Activated T-helper 1 cell treated with anti-CD3 and anti-CD28 coated beads, Interleukin-12 subunit alpha, Interleukin-12 subunit beta, Interleukin-2, Interleukin-4 antibody, amounts not matched to agents 30 ng/mL and 10 ng/mL and 1 ng/mL, durations not matched to agents 14 hours and 24 hours and 36 hours (primary cell): ENCODE measurements at regions of chr5 and their contacts with region 1.

Region 1: GRCh38 chr5:41856644-41857491 is 13.4 kb downstream of the OXCT1 start:
- DNase-seq: peak; percentile 46
- H3K4me3 Mint-ChIP-seq: no peak overlapping the region
- H3K27ac Mint-ChIP-seq: no peak overlapping the region
- H3K4me1 Mint-ChIP-seq: peaks cover 27% of the 10 kb centered on the region
- H3K27me3 Mint-ChIP-seq: no peaks in the 10 kb centered on the region

Region 2: DNA sequence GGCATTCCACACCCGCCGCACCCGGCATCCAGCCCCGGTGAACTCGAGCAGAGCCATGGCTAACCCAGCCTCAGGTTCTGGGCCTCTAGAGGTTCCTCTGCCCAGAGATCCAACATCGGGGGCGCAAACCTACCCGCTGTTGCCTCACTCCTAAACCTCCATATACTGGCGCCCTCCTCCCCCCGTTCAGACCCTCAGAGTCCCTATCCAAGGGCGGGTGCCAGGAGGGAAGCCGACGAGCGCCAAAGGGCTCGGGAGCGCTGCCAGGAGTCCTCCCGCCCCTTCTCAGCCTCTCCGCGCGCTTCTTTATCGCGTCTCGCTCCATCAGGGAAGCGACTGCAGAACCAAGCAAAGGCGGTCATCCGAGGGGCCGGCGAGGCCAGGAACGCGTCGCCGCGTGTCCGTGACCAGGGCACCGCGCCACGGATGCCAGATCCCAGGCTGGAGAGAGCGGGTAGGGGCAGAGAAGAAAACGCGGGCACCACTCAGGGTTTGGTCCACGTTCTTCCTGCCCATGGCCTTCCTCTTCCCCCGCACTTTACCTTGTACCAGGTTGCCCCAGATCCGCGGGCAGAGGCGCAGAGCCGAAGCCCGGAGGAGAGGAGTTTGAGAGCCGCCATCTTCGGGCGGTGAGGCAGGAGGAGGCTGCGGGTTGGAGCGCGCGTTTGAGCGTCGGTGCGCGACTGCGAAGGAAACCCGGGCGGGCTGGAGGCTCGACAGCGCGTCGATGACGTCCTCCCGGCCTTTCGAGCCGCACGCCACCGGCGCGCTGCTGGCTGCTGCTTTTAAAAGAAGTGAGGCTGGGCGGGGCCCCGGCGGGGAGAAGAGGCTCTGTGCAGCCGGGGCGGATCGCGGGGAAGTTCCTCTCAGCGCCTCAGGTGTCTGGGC is 13.1 kb after region 1 on chr5 and contains the start of gene OXCT1:
- intact Hi-C with region 1: loop called (anchors 1 kb)
- DNase-seq: peak; percentile 92
- H3K4me3 Mint-ChIP-seq: peak within 1 kb of the TSS; percentile 94
- H3K27ac Mint-ChIP-seq: peak within 1 kb of the TSS; percentile 96
- H3K4me1 Mint-ChIP-seq: peaks cover 56% of the 10 kb centered on the region
- H3K27me3 Mint-ChIP-seq: no peaks in the 10 kb centered on the region
- total RNA-seq, gene OXCT1: 84.4 and 85.1 TPM in 2 replicates

Region 3: GRCh38 chr5:41903892-41904799 is 47.3 kb after region 1 on chr5 and contains the start of gene RIMOC1:
- intact Hi-C with region 1: loop called (anchors 1 kb)
- DNase-seq: peak; percentile 98
- H3K4me3 Mint-ChIP-seq: peak within 1 kb of the TSS; percentile 99
- H3K27ac Mint-ChIP-seq: peak within 1 kb of the TSS; percentile 100
- H3K4me1 Mint-ChIP-seq: peaks cover 54% of the 10 kb centered on the region
- H3K27me3 Mint-ChIP-seq: peaks cover 10% of the 10 kb centered on the region
- total RNA-seq, gene RIMOC1: 28.0 and 29.0 TPM in 2 replicates

Region 4: GRCh38 chr5:42005561-42006153 is 148.8 kb after region 1 on chr5:
- intact Hi-C with region 1: loop called (anchors 1 kb)
- DNase-seq: no peak
- H3K4me3 Mint-ChIP-seq: no peak overlapping the region
- H3K27ac Mint-ChIP-seq: no peak overlapping the region
- H3K4me1 Mint-ChIP-seq: no peaks in the 10 kb centered on the region
- H3K27me3 Mint-ChIP-seq: peaks cover 4% of the 10 kb centered on the region

Region 5: GRCh38 chr5:42366051-42366450 is 509.2 kb after region 1 on chr5:
- intact Hi-C with region 1: no loop called
- DNase-seq: no peak
- H3K4me3 Mint-ChIP-seq: no peak overlapping the region
- H3K27ac Mint-ChIP-seq: no peak overlapping the region
- H3K4me1 Mint-ChIP-seq: no peaks in the 10 kb centered on the region
- H3K27me3 Mint-ChIP-seq: no peaks in the 10 kb centered on the region

Region 6: DNA sequence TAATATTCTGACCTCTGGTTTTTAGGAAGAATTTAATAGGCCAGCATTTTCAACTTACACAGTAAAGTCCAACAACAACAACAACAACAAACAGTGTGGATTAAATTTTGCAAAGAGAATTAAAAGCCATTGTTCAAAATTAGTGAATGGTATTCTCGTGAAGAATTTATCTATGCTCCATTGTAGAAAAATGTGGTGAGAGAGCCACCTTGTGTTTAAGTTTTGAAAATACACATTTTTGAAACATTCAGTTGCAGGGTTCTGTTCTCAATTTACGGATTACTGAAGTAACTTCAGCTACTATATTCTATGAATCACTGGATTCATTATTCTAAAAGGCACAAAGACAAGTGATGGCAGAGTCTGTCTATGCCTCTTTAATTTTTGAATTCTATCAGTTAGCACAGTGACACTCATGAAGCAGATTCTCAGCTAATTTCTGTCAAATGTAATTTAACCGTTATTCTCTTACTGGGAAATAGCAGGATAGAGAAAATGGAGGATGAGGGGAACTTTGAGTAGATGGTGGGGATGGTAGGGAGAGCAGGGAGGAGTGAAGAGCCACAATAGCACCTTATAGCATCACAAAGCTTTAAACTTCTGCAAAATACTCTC is 910.7 kb after region 1 on chr5:
- intact Hi-C with region 1: loop called (anchors 1 kb)
- DNase-seq: no peak
- H3K4me3 Mint-ChIP-seq: no peak overlapping the region
- H3K27ac Mint-ChIP-seq: no peak overlapping the region
- H3K4me1 Mint-ChIP-seq: no peaks in the 10 kb centered on the region
- H3K27me3 Mint-ChIP-seq: peaks cover 10% of the 10 kb centered on the region